ENCODE measurements at regions of chr12 and their contacts with region 1.

Region 1: GRCh38 chr12:5988659-5989116 is 43.6 kb upstream of the ANO2 start:
- DNase-seq: peak; percentile 82
- CTCF ChIP-seq: peak; percentile 98

Region 2: GRCh38 chr12:5808981-5809380 is 179.7 kb before region 1 on chr12:
- CTCF ChIA-PET with region 1: no interaction called
- POLR2A ChIA-PET with region 1: no interaction called
- DNase-seq: no peak
- CTCF ChIP-seq: no peak

Region 3: DNA sequence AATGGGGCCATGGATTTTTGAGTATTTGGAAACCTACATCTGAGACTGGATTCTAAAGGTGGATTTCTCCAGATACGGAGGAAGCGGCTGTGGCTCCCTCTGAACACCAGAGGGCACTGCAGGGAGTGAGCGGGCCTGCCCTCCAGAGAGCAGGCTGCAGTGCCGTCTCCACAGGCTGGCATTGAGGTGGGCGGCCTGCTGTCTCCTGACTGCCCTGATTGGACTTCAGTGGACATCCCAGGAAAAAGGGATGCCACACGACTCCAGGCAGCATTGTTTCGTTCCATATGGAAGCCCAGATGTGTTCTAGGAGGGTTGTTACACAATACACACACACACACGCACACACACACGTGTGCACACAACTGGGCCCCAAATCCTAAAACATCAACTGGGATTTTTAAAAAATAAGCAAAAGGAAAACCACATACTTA is 22.7 kb before region 1 on chr12:
- CTCF ChIA-PET with region 1: interaction called, 10 read pairs
- POLR2A ChIA-PET with region 1: no interaction called
- DNase-seq: peak; percentile 67
- CTCF ChIP-seq: peak; percentile 87

Region 4: GRCh38 chr12:6018265-6018664 is 29.6 kb after region 1 on chr12:
- CTCF ChIA-PET with region 1: interaction called, 10 read pairs
- POLR2A ChIA-PET with region 1: no interaction called
- DNase-seq: no peak
- CTCF ChIP-seq: no peak

Region 5: DNA sequence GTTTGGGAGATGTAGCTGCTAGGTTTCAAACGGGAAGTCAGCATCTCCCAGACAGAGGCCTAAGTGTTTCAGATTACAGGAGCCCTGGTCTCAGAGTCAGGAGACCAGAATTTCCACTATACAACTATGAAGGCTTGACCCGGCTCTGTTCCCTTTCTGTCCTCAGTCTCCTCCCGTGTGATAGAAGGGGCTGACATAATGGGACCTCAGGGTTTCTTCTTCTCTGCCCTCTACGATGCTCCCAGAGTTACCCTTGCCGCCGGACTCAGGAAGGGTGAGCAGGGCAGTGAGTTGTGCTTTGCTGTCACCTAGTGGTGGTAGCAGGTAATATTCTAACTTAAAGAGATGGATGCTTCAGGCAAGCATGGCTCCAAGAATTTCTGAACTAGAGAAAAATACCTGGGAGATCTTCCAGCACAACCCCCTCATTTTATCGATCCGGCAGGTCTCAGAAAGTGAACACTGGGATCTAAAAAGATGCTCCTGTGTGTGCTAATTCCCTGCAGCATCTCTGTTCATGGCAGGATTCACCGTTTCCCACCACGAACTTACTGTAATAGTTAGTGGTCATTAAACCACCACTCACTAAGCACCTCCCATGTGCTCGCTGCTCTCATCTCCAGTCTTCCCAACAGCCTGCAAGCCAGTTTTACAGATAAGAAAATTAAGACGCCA is 51.3 kb after region 1 on chr12:
- CTCF ChIA-PET with region 1: interaction called, 255 read pairs
- POLR2A ChIA-PET with region 1: no interaction called
- DNase-seq: peak; percentile 71
- CTCF ChIP-seq: peak; percentile 90

Measured in GM10248 (cell line).